ENCODE measurements at regions of chr12 and their contacts with region 1.

Region 1: DNA sequence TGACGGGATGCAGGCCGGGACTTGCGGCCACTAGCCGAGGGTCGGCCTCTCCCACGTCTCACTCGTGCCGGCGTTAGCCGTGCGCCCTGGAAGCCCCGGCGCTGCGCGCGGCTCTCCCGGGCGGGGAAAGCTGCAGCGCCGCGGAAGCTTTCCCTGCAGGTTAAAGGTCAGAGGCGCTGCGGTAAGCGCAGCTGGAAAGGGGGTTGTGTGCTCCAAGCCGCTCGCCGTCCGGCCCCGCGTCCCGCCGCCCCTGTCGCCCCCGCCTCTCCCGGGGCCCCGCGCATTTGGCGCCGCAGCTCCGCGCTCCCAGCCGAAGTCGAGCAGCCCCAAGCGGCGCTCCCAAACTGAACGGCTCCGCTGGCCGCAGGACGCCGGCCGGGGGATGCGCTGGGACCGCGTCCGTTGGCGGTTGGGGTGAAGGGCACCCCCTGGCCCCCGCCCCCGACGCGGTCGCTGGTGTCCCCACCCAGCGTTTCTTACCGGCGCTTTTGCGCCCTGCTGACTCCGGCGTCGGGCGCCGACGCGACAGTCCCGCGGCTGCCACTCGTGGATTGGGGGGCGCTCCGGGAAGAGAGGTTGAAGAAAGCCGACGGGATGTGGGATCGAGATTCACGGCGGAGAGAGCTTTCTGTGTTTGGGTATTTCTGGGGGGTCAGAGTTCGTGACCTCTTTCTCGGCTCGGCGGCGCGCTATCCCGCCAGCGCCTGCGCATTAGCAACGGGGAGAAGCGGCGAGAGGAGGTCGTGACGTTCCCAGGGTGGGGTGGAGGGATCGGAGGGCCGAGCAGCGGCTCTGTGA is at the start of gene NR2C1:
- DNase-seq: peak; percentile 86 to 98 (median 94)

Region 2: GRCh38 chr12:95217377-95218149 is 144.5 kb after region 1 on chr12 and contains the starts of genes FGD6 and VEZT:
- intact Hi-C with region 1: loop called (anchors 5 kb)
- DNase-seq: peak; percentile 94 to 100 (median 99)

Region 3: DNA sequence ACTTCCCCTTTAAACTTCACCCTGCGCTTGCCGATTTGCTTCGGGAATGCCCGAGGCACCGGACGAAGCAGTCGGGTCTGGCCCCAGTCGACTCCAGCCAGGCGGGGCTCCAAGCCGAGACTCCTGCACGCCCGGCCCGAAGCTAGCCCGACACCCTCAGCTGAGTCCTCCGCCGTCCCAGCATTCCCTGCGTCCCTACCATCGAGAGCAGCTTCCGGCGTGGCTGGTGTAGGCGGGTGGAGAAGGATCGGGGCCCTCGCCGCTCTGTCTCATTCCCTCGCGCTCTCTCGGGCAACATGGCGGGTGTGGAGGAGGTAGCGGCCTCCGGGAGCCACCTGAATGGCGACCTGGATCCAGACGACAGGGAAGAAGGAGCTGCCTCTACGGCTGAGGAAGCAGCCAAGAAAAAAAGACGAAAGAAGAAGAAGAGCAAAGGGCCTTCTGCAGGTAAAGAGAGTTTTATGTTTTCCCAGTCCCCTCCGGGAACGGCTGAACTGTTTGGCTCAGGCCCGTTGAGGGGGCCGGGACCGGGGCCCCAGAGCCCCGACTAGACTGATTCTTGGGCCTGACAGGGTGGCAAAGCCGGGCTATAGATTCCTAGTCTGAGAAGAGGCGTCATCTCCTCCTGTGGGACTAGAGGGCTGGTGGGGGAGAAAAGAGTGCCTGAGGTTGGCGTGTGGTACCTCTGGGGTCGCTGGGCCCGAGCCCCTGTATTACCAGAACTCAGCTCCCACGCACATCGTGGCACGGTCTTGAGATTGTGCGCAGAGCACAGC is 401.0 kb after region 1 on chr12 and contains the start of gene METAP2:
- intact Hi-C with region 1: loop called (anchors 5 kb)
- DNase-seq: peak; percentile 91 to 99 (median 97)